Activated T-helper 1 cell treated with anti-CD3 and anti-CD28 coated beads, Interleukin-12 subunit alpha, Interleukin-12 subunit beta, Interleukin-2, Interleukin-4 antibody, amounts not matched to agents 30 ng/mL and 10 ng/mL and 1 ng/mL, durations not matched to agents 14 hours and 24 hours and 36 hours (primary cell): ENCODE measurements at regions of chr14 and their contacts with region 1.

Region 1: DNA sequence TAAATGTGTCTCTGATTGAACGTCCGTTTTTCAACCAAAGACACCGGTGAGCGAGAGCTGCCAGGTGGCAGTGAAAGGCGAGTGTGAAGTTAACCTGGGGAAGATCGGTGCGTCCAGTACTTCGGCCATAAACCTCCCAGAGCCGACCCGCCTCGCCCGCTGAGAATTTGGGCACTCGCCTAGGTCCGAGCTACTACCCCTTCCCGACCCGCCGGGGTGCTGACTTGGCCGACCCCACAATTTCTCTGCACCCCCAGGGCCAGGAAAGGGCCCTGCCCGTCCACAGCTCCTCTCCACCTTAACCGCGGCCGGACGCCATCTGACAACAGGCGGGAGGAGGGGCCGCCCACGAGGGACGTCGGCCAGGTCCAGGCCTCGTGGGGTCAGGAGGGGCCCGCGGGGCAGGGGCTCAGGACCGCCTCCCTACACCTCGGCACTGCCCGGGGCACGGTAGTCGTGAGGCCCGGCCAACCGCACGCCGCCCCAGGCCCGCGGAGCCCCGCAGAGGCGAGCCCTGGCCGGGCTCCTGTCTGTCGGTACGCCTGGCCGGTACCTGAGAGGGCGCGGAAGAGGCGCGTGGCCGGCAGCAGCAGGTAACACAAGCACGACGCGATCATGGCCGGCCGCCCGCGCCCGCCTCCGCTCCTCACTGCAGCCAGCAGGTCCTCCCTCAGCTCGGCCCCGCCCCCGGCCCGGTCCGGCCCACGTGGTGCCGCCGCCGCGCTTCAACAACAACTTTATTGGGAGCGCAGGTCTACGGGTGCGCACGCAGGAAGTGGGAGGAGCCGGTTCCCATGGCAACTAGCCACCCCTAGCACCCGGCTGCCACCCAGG is at the start of gene ANGEL1:
- DNase-seq: peak; percentile 96
- H3K4me3 Mint-ChIP-seq: peak within 1 kb of the TSS; percentile 96
- H3K27ac Mint-ChIP-seq: peak within 1 kb of the TSS; percentile 95
- H3K4me1 Mint-ChIP-seq: peaks cover 23% of the 10 kb centered on the region
- H3K27me3 Mint-ChIP-seq: peaks cover 2% of the 10 kb centered on the region
- total RNA-seq, gene ANGEL1: 14.1 and 14.8 TPM in 2 replicates

Region 2: GRCh38 chr14:76151398-76152339 is 660.8 kb before region 1 on chr14 and contains the start of gene GPATCH2L:
- intact Hi-C with region 1: loop called (anchors 5 kb)
- DNase-seq: peak; percentile 95
- H3K4me3 Mint-ChIP-seq: peak within 1 kb of the TSS; percentile 94
- H3K27ac Mint-ChIP-seq: peak within 1 kb of the TSS; percentile 94
- H3K4me1 Mint-ChIP-seq: peaks cover 54% of the 10 kb centered on the region
- H3K27me3 Mint-ChIP-seq: peaks cover 11% of the 10 kb centered on the region
- total RNA-seq, gene GPATCH2L: 56.1 and 60.9 TPM in 2 replicates

Region 3: DNA sequence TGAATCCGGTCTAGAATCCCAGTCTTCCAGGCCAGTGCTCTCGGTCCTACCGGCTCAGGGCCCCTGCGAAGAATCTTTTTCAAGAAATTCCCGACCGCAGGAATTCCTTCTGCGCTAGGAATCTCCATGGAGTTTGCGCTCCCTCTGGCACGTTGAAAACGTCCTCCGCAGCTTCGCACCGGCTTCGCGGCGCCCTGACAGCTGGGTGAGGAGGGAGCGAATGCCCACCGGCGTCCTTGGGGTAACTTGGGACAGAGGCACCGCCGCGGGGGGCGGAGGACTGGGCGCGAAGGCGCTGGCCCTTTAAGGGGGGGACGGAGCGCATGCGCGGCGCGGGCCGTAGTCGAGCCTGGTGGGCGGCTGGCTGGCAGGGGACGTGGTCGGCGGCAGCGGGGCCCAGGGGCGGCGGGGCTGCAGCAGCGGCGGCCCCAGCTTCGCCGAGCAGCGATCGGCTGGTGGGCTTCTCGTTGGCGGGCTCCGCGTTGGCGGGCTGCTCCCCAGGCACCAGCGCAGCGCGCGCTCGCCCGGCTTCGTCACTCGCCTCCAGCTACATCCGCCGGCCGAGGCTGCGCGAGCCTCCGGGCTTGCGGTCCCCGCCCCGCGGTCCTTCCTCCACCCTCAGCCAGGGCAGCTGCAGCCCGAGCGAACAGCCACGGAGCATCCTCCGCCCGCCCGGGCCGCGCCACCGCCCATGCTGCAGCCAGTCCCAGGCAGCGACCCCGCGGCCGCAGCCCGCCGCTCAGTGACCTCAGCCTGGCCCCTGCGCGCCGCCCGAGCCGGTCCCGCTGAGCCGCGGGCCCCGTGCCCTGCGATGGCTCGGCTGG is 51.1 kb before region 1 on chr14 and contains the start of gene VASH1:
- intact Hi-C with region 1: loop called (anchors 1 kb)
- DNase-seq: peak; percentile 56
- H3K4me3 Mint-ChIP-seq: peak within 1 kb of the TSS; percentile 82
- H3K27ac Mint-ChIP-seq: no peak within 1 kb of the TSS
- H3K4me1 Mint-ChIP-seq: peaks cover 24% of the 10 kb centered on the region
- H3K27me3 Mint-ChIP-seq: peaks cover 59% of the 10 kb centered on the region
- total RNA-seq, gene VASH1: 6.1 and 7.1 TPM in 2 replicates

Region 4: GRCh38 chr14:76784266-76785264 is 27.9 kb before region 1 on chr14:
- intact Hi-C with region 1: loop called (anchors 2 kb)
- DNase-seq: peak; percentile 33
- H3K4me3 Mint-ChIP-seq: no peak overlapping the region
- H3K27ac Mint-ChIP-seq: no peak overlapping the region
- H3K4me1 Mint-ChIP-seq: peaks cover 49% of the 10 kb centered on the region
- H3K27me3 Mint-ChIP-seq: no peaks in the 10 kb centered on the region

Region 5: GRCh38 chr14:76977793-76978720 is 165.6 kb after region 1 on chr14:
- intact Hi-C with region 1: loop called (anchors 5 kb)
- DNase-seq: peak; percentile 85
- H3K4me3 Mint-ChIP-seq: peak overlapping the region; percentile 45
- H3K27ac Mint-ChIP-seq: peak overlapping the region; percentile 90
- H3K4me1 Mint-ChIP-seq: peaks cover 27% of the 10 kb centered on the region
- H3K27me3 Mint-ChIP-seq: no peaks in the 10 kb centered on the region

Region 6: DNA sequence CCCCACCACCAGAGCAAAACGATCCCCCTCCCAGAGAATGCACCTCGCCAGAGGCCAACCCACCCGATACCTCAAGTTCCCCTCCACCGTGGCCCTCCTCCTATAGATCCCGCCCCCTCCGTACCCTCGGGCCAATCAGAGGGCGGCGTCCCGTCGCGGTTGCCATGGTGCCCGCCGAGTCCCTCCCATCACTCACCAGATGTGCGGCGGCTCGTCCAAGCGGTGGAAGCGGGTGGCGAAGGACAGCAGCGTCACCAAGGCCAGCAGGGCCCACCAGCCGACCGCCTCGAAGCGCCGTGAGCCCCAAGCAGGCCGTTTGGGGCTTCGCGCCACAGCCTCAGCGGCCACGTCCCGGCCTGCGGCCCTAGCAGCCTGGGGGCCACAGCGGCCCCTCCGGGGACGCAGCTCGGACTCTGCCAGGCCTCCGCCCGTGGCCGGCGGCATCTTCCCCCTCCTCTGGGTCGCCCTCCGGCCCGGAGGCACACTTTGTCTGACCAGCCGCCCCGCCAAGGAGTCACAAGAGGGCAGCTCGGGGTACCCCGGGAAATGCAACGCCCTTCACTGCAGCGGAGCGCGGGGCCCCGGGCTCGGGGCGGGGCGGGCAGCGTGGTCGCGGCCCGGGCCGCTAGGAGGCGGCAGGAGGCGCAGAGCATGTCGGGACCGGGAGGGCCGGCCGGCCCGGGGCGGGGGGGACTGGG is 508.0 kb after region 1 on chr14 and contains the start of gene POMT2:
- intact Hi-C with region 1: loop called (anchors 1 kb)
- DNase-seq: peak; percentile 92
- H3K4me3 Mint-ChIP-seq: peak within 1 kb of the TSS; percentile 92
- H3K27ac Mint-ChIP-seq: peak within 1 kb of the TSS; percentile 99
- H3K4me1 Mint-ChIP-seq: peaks cover 22% of the 10 kb centered on the region
- H3K27me3 Mint-ChIP-seq: no peaks in the 10 kb centered on the region
- total RNA-seq, gene POMT2: 20.5 and 22.1 TPM in 2 replicates